Activated CD8-positive, alpha-beta T cell treated with anti-CD3 and anti-CD28 coated beads for 36 hours (primary cell): ENCODE measurements at regions of chr3 and their contacts with region 1.

Region 1: DNA sequence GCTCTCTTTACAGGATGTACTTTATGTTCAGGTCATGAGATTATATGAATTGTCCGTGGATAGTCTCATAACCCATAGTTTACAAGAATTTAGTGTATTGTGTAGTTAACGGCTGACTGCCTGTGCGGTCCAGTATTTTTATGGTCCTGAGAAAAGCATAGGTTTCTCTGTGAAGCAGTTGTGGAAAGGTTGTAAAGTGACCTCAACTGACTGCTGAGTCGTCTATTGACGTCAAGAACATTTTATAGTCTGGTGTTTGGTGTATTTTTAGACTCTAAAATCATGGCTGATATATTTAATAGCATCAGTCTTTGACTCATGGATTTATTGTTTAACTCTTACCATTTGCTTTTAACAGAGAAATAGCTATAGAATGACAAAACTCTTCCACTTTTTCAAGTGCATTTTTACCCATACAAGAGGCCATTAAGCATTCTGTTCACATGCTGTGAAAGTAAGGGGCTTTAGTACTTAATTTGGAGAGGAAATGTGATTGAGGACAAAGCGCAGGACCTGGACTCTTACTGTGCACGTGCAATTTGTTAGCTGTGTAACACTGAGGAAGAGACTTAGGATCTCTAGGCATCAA is 240.7 kb downstream of the NFKBIZ start:
- DNase-seq: no peak
- ATAC-seq: no peak
- H3K4me3 Mint-ChIP-seq: no peak overlapping the region
- H3K27ac Mint-ChIP-seq: no peak overlapping the region
- H3K4me1 Mint-ChIP-seq: peaks cover 45% of the 10 kb centered on the region
- H3K27me3 Mint-ChIP-seq: no peaks in the 10 kb centered on the region
- CTCF ChIP-seq: no peak

Region 2: DNA sequence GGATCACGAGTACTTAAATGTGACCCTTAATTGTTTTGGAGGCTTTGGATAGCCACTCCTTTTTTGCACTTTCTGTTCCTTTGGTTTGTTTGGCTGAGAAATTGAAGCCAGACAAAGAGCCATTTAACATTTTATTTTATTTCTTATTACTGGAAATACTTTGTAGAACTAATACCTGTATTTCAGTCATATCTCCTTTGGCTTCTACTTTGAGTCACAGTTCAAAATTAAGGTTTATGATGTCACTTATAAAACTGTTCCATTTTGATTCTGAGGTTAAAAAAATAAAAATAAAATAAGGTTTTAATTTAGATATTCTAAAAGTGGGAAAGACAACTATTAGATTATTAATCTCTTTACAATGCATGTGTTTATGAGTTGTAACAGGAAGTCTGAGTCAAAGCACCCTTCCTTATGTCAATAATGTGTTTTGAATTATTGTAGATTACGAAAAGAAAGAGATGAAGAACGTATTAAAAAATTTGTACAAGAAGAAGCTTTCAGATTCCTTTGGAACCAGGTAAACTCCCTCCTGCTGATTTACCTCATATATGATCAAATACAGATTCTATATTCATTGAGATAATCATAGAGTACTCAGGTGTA is 327.9 kb before region 1 on chr3:
- CTCF ChIA-PET with region 1: no interaction called
- POLR2A ChIA-PET with region 1: no interaction called
- intact Hi-C with region 1: no loop called
- DNase-seq: no peak
- ATAC-seq: no peak
- H3K4me3 Mint-ChIP-seq: no peak overlapping the region
- H3K27ac Mint-ChIP-seq: no peak overlapping the region
- H3K4me1 Mint-ChIP-seq: peaks cover 8% of the 10 kb centered on the region
- H3K27me3 Mint-ChIP-seq: no peaks in the 10 kb centered on the region
- CTCF ChIP-seq: no peak

Region 3: DNA sequence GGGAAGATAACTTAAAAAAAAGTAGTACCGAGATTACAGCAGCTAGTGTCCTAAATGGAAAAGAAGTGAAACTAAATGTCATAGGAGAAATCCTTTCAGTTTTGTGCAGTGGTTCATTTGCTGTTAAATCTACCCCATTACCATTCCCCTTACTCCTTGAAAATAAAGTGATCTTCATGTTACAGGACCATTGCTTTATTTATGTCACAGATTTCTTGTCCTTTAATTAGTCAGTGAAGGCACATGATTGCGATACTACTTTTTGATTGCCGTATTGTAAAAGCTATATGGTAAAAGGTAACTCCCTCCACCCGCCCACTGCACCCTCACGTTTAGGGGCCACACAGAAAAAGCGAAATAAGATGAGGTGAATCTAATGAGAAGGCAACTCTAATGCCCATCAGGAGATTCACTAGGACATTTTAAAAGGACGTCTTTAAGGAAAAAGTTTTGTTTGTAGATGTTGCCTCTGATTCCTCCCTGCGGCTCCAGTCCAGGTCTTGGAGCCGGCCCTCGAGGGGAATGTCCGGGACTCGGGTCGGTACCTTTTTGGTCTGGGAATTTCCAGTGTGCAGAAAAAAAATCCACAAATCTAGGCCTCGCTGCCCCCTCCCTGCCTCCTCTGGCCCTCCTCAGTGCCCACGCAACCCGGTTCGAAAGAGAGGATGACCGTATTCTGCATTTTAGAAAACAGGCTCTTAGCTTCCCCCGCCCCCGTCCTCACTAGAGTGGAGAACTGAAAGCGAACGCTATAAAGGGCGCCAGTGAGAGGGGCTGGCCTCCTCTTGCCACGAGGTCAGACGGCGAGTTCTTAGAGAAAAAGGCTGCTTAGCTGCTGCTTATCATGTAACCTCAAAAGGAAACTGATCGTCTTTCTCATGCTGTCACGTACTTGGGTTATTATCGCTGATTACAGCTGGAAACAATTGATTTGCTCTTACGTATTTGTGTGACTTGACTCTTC is 262.5 kb before region 1 on chr3:
- CTCF ChIA-PET with region 1: no interaction called
- POLR2A ChIA-PET with region 1: interaction called, 7 read pairs
- intact Hi-C with region 1: loop called (anchors 5 kb)
- DNase-seq: peak; percentile 98
- ATAC-seq: peak; percentile 86
- H3K4me3 Mint-ChIP-seq: peak overlapping the region; percentile 84
- H3K27ac Mint-ChIP-seq: peak overlapping the region; percentile 95
- H3K4me1 Mint-ChIP-seq: peaks cover 63% of the 10 kb centered on the region
- H3K27me3 Mint-ChIP-seq: no peaks in the 10 kb centered on the region
- CTCF ChIP-seq: no peak

Region 4: GRCh38 chr3:101988591-101988990 is 101.4 kb before region 1 on chr3:
- CTCF ChIA-PET with region 1: no interaction called
- POLR2A ChIA-PET with region 1: no interaction called
- intact Hi-C with region 1: loop called (anchors 5 kb)
- DNase-seq: peak; percentile 41
- ATAC-seq: peak; percentile 73
- H3K4me3 Mint-ChIP-seq: no peak overlapping the region
- H3K27ac Mint-ChIP-seq: no peak overlapping the region
- H3K4me1 Mint-ChIP-seq: peaks cover 21% of the 10 kb centered on the region
- H3K27me3 Mint-ChIP-seq: no peaks in the 10 kb centered on the region
- CTCF ChIP-seq: no peak

Region 5: GRCh38 chr3:102163036-102163827 is 73.2 kb after region 1 on chr3:
- CTCF ChIA-PET with region 1: no interaction called
- POLR2A ChIA-PET with region 1: no interaction called
- intact Hi-C with region 1: loop called (anchors 5 kb)
- DNase-seq: no peak
- ATAC-seq: no peak
- H3K4me3 Mint-ChIP-seq: no peak overlapping the region
- H3K27ac Mint-ChIP-seq: no peak overlapping the region
- H3K4me1 Mint-ChIP-seq: peaks cover 22% of the 10 kb centered on the region
- H3K27me3 Mint-ChIP-seq: no peaks in the 10 kb centered on the region
- CTCF ChIP-seq: no peak